ENCODE measurements at regions of chr11 and their contacts with region 1.

Region 1: GRCh38 chr11:128879817-128880216 is 11.3 kb upstream of the KCNJ5 start:
- DNase-seq: no peak
- ATAC-seq: no peak
- H3K4me3 ChIP-seq: no peak overlapping the region
- H3K4me3 Mint-ChIP-seq: no peak overlapping the region
- H3K27ac ChIP-seq: no peak overlapping the region
- H3K27ac Mint-ChIP-seq: no peak overlapping the region
- H3K4me1 ChIP-seq: no peaks in the 10 kb centered on the region
- H3K4me1 Mint-ChIP-seq: no peaks in the 10 kb centered on the region
- H3K27me3 ChIP-seq: peaks cover 0 to 6% of the 10 kb centered on the region in 2 experiments
- H3K27me3 Mint-ChIP-seq: peaks cover 46% of the 10 kb centered on the region
- CTCF ChIP-seq: no peak

Region 2: GRCh38 chr11:128956401-128957201 is 76.8 kb after region 1 on chr11:
- CTCF ChIA-PET with region 1: interaction called, 222 read pairs
- POLR2A ChIA-PET with region 1: interaction called, 3 read pairs
- intact Hi-C with region 1: loop called in 1 of 2 experiments (anchors 1 kb)
- DNase-seq: peak in 3 of 9 experiments; percentile 12 to 66 (median 59)
- ATAC-seq: no peak
- H3K4me3 ChIP-seq: no peak overlapping the region
- H3K4me3 Mint-ChIP-seq: no peak overlapping the region
- H3K27ac ChIP-seq: no peak overlapping the region
- H3K27ac Mint-ChIP-seq: no peak overlapping the region
- H3K4me1 ChIP-seq: no peaks in the 10 kb centered on the region
- H3K4me1 Mint-ChIP-seq: peaks cover 2% of the 10 kb centered on the region
- H3K27me3 ChIP-seq: no peaks in the 10 kb centered on the region
- H3K27me3 Mint-ChIP-seq: peaks cover 8% of the 10 kb centered on the region
- CTCF ChIP-seq: peak; percentile 70